GM13977 (cell line): ENCODE measurements at regions of chr3 and their contacts with region 1.

Region 1: DNA sequence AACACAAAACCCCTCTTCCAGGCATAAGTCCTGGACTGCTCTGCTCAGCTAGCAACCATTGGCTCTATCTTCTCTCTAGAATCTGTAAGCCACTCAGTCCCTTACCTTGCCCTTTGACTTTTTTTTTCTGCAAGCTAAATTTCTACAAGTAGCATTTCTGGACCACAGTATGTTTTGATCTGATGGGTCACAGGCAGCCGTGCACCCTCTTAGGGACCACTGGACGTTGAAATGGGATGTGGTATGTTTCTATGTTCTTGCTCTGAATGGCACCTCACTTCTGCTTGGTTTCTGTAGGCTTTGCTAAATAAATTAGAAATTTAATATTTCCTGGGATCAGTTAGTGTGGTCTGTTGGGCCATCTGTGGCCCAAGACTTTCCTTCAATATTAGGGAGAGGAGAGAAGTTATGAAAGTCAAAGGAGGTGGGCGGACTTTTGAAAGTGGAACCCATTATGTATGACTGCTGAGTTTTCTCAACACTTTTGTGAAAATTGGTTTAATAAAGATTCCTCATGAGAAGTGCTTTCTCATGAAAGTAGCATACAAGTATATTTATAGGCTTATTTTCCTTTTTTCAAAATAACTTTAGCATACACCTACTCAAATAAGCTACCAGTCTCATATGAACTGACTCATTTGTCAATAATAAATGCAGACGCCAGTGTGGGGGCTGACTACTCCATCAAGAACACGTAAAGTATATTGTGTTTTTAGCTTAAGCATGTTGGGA is 18.4 kb upstream of the TIPARP start:
- DNase-seq: peak; percentile 34
- CTCF ChIP-seq: no peak

Region 2: GRCh38 chr3:156605686-156606605 is 50.0 kb before region 1 on chr3:
- in situ Hi-C with region 1: loop called (anchors 5 kb)
- DNase-seq: peak; percentile 16
- CTCF ChIP-seq: no peak